Esophagus muscularis mucosa (tissue), 4 donors: ENCODE measurements at regions of chr3 and their contacts with region 1.

Region 1: DNA sequence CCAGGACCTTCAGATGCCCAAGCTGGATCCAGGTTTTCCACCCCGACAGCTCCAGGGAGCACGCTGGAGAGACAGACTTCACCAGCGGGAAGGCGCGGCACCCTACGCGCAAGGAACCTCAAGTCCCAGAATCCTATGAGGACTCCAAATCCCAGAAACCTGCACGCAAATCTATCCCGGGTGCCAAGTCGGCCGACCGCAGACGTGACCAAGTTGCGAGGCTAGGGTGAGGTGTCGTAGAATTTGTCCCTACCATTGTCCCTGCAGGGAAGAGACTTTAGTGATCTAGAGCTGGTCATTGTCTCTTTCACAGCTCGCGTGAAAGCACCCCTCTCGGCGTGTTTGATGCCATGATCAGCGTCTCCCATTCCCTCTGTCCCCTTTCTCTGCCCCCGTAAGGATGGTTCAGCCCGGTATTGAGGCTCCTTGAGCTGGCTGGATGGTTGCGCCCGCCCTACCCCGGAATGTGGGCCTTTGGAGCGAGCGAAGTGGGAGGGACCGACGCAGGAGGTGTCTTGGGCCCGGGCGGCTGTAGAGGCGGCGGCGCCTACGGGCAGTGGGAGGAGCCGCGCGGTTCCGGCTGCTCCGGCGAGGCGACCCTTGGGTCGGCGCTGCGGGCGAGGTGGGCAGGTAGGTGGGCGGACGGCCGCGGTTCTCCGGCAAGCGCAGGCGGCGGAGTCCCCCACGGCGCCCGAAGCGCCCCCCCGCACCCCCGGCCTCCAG is at the start of gene PRKCI:
- DNase-seq: peak; percentile 98
- H3K4me3 ChIP-seq: peak within 1 kb of the TSS; percentile 82 to 98 (median 92)
- H3K27ac ChIP-seq: peak within 1 kb of the TSS; percentile 93 to 97 (median 94)
- H3K4me1 ChIP-seq: peaks cover 0 to 49% (median 42%) of the 10 kb centered on the region in 4 donors
- H3K27me3 ChIP-seq: no peaks in the 10 kb centered on the region
- CTCF ChIP-seq: peak in 1 of 3 experiments; percentile 17
- EP300 ChIP-seq: no peak
- POLR2A ChIP-seq: peak; percentile 67
- total RNA-seq, gene PRKCI: 35.7 to 90.9 (median 39.8) TPM

Region 2: GRCh38 chr3:170180908-170181879 is 40.9 kb before region 1 on chr3 and contains the start of gene PHC3:
- intact Hi-C with region 1: loop called (anchors 5 kb)
- DNase-seq: peak; percentile 98
- H3K4me3 ChIP-seq: peak within 1 kb of the TSS; percentile 72 to 92 (median 85)
- H3K27ac ChIP-seq: peak within 1 kb of the TSS; percentile 94 to 97 (median 96)
- H3K4me1 ChIP-seq: peaks cover 18 to 41% (median 37%) of the 10 kb centered on the region in 4 donors
- H3K27me3 ChIP-seq: no peaks in the 10 kb centered on the region
- CTCF ChIP-seq: peak in 1 of 3 experiments; percentile 22
- EP300 ChIP-seq: no peak
- POLR2A ChIP-seq: peak; percentile 17
- total RNA-seq, gene PHC3: 53.7 to 83.1 (median 70.8) TPM

Region 3: DNA sequence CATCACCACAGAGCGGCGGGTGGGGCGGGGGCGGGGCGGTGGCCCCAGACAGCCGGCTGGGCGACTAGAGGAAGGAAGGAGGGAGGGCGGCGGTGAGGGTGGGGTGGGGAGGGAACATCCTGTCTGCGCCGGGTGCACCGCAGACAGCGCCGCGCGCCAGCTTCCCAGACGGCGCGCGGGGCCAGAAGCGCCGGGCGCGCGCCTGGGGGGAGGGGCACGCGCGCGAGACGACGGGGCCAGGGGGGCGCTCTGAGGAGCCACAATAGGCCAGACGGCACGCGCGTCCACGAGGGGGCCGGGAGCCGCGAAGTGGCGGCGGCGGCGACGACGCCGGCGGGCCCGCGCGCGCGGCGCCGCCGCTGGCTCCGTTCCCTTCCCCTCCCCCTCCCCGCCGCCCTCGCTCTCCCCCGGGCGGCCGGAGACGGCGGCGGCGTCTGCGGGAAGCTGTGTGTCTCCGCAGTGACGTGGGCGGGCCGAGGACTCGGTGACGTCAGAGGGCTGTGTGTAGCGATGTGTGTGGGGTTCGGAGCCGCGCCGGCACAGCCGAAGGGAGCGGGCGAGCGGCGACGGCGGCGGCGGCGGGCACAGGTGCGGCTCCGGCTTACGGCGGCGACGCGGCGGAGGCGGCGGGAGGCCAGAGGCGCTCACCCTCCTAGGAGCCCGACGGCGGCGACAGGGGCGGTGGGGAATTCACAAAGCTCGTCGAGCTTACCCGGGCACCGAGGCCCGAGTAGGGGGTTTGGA is 135.3 kb after region 1 on chr3 and contains the start of gene SKIL:
- intact Hi-C with region 1: loop called (anchors 5 kb)
- DNase-seq: peak; percentile 99
- H3K4me3 ChIP-seq: peak within 1 kb of the TSS; percentile 77 to 96 (median 96)
- H3K27ac ChIP-seq: peak within 1 kb of the TSS; percentile 97 to 100 (median 98)
- H3K4me1 ChIP-seq: peaks cover 22 to 55% (median 51%) of the 10 kb centered on the region in 4 donors
- H3K27me3 ChIP-seq: no peaks in the 10 kb centered on the region
- CTCF ChIP-seq: peak in 1 of 3 experiments; percentile 8
- EP300 ChIP-seq: peak; percentile 14
- POLR2A ChIP-seq: no peak
- total RNA-seq, gene SKIL: 34.7 to 54.4 (median 39.5) TPM

Region 4: DNA sequence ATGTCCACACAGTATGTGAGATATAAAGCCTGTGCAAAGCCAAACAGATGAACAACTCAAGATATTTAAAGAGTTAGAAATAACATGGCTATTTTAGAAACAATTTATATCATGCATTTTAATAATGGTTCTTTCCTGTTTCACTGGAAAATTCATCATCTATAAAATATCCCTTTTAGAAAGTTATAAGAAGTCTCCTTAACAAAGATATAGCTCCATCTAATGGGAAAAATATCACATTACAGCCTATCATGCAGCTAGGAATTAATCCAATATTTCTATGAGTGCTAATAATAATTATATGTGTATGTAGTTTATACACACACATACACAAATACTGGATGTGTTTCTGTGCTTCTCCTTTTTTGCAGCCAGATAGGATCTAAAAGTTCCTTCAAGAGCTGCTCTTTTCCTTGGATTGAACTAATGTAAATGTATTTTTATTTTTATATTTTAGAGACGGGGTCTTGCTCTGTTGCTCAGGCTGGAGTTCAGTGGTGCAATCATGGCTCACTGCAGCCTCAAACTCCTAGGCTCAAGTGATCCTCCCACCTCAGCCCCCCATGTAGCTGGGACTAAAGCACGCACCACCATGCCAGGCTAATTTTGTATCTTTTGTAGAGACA is 626.3 kb after region 1 on chr3:
- intact Hi-C with region 1: no loop called
- DNase-seq: no peak
- H3K4me3 ChIP-seq: no peak overlapping the region
- H3K27ac ChIP-seq: no peak overlapping the region
- H3K4me1 ChIP-seq: no peaks in the 10 kb centered on the region
- H3K27me3 ChIP-seq: no peaks in the 10 kb centered on the region
- CTCF ChIP-seq: peak in 1 of 3 experiments; percentile 39
- EP300 ChIP-seq: no peak
- POLR2A ChIP-seq: no peak